ENCODE measurements at regions of chrX and their contacts with region 1.

Region 1: GRCh38 chrX:22081475-22082092 is 49.5 kb downstream of the PHEX start:
- DNase-seq: no peak
- H3K4me3 ChIP-seq: no peak overlapping the region
- CTCF ChIP-seq: peak; percentile 63

Region 2: DNA sequence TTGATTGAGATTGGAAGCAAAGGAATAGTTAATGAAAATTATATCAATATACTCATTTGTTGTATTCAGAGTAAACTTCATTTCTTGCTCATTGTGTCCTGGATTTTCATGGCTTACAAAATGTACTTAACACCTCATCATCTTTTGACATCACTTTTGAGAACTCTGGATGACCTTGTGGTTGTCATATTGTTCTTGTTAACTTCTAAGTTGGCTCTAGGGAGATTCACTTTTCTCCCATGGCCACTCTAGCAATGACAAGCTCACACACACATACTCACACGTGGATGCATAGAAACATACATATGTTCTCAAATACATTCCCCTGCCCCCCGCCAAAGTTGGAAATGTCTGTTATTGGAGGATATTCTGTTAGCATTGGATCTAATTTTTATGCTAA is 34.1 kb before region 1 on chrX:
- CTCF ChIA-PET with region 1: no interaction called
- POLR2A ChIA-PET with region 1: no interaction called
- DNase-seq: no peak
- H3K4me3 ChIP-seq: no peak overlapping the region
- CTCF ChIP-seq: no peak

Region 3: GRCh38 chrX:22069586-22069985 is 12.0 kb before region 1 on chrX:
- CTCF ChIA-PET with region 1: interaction called, 46 read pairs
- POLR2A ChIA-PET with region 1: no interaction called
- DNase-seq: no peak
- H3K4me3 ChIP-seq: no peak overlapping the region
- CTCF ChIP-seq: no peak

Region 4: GRCh38 chrX:22095286-22095685 is 13.7 kb after region 1 on chrX:
- CTCF ChIA-PET with region 1: interaction called, 19 read pairs
- POLR2A ChIA-PET with region 1: no interaction called
- DNase-seq: no peak
- H3K4me3 ChIP-seq: no peak overlapping the region
- CTCF ChIP-seq: no peak

Region 5: GRCh38 chrX:22135994-22136684 is 54.6 kb after region 1 on chrX:
- CTCF ChIA-PET with region 1: interaction called, 11 read pairs
- POLR2A ChIA-PET with region 1: no interaction called
- DNase-seq: no peak
- H3K4me3 ChIP-seq: no peak overlapping the region
- CTCF ChIP-seq: no peak

Region 6: GRCh38 chrX:22237479-22237878 is 155.9 kb after region 1 on chrX:
- CTCF ChIA-PET with region 1: no interaction called
- POLR2A ChIA-PET with region 1: no interaction called
- DNase-seq: no peak
- H3K4me3 ChIP-seq: no peak overlapping the region
- CTCF ChIP-seq: no peak